MCF 10A (cell line): ENCODE measurements at regions of chr7 and their contacts with region 1.

Region 1: DNA sequence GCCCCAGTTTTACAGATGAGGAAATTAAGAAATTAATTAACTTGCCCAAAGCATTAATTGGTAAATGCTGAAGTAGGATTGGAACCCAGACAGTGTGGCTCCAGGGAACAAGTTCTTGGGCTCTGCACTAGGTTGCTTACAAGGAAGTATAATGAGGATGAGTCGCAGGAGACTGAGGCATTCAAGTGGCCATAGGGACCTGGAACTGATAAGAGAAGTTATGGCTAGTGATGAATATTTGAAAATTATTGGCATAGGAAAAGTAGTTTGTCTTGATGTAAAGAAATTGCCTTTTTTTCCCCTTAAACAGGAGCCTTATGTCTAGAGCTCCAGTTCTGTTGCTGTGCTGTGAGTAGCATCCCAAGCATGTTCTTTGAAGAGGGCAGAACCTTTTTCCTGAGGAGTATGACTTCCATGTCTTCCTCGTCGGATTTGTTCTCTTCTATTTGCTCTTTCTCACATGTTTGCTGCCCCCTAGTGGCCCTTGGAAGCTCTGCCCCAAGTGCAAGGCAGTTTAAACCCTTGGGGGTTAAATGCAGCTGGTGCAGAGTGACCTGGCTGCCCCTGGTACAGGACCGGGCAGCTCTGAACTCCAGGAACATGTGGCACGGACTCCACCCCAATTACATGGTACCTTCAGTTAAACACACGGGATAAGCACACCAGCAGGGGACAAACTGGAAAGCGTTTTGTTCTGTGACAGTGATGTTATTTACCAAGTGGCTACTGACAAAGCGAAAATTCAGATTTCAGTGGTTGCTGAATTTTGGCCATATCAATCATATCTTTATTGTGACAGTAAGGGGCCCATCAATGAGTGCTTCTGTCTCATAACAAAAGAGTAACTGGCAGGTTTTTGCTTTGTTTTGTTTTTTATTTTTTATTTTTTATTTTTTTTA is 148.8 kb downstream of the HECW1 start:
- DNase-seq: peak; percentile 86
- H3K4me3 Mint-ChIP-seq: no peak overlapping the region
- H3K27ac Mint-ChIP-seq: no peak overlapping the region
- H3K4me1 Mint-ChIP-seq: no peaks in the 10 kb centered on the region
- H3K27me3 Mint-ChIP-seq: no peaks in the 10 kb centered on the region
- CTCF ChIP-seq: peak; percentile 90

Region 2: DNA sequence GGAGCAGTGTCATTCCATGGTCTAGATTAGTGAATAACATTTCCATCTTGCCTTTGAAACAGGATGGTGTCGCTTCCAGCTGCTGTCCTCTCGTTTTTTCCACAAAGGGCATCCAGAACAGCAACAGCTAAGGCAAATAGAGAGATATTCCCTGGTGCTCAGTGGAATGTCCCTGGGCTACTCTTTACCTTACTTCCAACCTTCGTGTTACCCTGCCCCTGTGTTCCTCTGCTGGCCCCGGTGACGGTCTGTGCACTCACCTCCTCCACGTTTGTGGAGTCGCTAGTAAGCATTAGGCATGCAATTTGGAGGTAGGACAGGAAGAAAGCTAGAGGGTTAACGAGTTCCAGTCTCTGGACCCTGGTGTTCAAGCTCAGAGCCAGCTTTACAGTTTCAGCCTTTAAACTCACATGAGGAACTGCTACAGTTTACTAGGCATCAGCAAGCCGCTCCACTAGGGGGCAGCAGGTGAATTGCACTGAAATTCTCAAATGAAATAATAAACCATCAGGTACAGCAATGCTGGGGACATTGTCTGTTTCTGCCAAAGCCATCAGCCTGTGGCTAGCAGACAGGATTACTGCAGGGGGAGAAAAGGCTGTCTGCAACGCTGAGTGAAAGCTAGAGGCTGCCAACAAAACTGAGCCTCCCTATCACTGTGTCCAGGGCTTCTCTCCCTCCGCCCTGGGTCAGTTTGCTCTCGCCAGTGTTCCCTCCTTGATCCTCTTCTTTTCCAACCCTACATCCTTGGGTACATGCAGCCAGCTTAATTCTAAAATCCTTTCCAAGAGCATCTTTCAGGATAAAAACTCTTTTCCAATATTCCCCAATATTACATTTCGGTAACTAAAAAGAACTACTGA is 320.0 kb before region 1 on chr7:
- CTCF ChIA-PET with region 1: interaction called, 145 read pairs
- POLR2A ChIA-PET with region 1: interaction called, 3 read pairs
- intact Hi-C with region 1: loop called (anchors 1 kb)
- DNase-seq: peak; percentile 76
- H3K4me3 Mint-ChIP-seq: no peak overlapping the region
- H3K27ac Mint-ChIP-seq: no peak overlapping the region
- H3K4me1 Mint-ChIP-seq: no peaks in the 10 kb centered on the region
- H3K27me3 Mint-ChIP-seq: no peaks in the 10 kb centered on the region
- CTCF ChIP-seq: peak; percentile 89

Region 3: GRCh38 chr7:43119371-43120075 is 141.7 kb before region 1 on chr7:
- CTCF ChIA-PET with region 1: no interaction called
- POLR2A ChIA-PET with region 1: no interaction called
- intact Hi-C with region 1: loop called (anchors 5 kb)
- DNase-seq: peak; percentile 51
- H3K4me3 Mint-ChIP-seq: no peak overlapping the region
- H3K27ac Mint-ChIP-seq: no peak overlapping the region
- H3K4me1 Mint-ChIP-seq: no peaks in the 10 kb centered on the region
- H3K27me3 Mint-ChIP-seq: peaks cover 42% of the 10 kb centered on the region
- CTCF ChIP-seq: no peak

Region 4: DNA sequence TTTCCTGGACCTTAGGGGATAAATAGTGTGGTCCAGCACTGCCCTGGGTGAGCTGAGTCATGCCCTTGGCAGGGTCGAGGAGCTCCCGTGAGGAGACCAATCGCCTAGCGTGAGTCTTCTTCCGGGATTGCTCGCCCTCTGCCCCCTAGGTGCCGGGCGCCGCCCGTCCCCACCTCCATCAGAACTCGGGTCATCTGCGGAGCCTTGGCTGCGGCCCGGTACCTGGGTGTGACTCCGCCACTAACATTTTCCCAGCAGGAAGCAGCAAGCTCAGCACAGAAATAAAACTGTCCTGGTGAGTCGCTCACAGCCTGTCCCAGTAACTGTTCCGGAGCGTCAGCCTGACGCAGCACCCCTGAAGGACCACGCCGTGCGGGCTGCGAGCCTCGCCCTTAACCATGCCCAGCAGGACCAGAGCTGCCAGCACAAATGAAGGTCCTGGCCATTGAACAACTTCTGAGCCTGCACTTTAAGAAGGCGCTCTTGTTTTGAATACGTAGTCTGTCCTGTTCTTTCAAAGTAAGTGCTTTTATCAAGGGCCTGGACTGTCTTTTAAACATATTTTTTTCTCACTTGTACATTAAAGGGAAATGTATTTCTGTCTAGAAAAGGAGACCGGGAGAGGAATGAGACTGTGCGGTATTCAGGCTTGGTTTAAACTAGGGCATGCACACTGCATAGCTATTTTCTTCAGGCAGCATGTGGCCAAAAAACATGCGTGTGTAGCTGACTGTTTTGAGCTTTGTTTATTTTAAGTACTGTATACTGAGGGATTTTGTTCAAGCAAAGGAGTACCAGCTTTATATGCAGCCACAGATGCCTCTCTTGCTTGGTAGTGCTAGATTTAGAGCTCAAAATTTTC is 12.0 kb before region 1 on chr7:
- CTCF ChIA-PET with region 1: interaction called, 22 read pairs
- POLR2A ChIA-PET with region 1: interaction called, 3 read pairs
- intact Hi-C with region 1: no loop called
- DNase-seq: peak; percentile 74
- H3K4me3 Mint-ChIP-seq: no peak overlapping the region
- H3K27ac Mint-ChIP-seq: no peak overlapping the region
- H3K4me1 Mint-ChIP-seq: no peaks in the 10 kb centered on the region
- H3K27me3 Mint-ChIP-seq: peaks cover 20% of the 10 kb centered on the region
- CTCF ChIP-seq: no peak

Region 5: GRCh38 chr7:43454936-43455518 is 193.8 kb after region 1 on chr7:
- CTCF ChIA-PET with region 1: interaction called, 14 read pairs
- POLR2A ChIA-PET with region 1: no interaction called
- intact Hi-C with region 1: no loop called
- DNase-seq: peak; percentile 71
- H3K4me3 Mint-ChIP-seq: no peak overlapping the region
- H3K27ac Mint-ChIP-seq: no peak overlapping the region
- H3K4me1 Mint-ChIP-seq: peaks cover 6% of the 10 kb centered on the region
- H3K27me3 Mint-ChIP-seq: no peaks in the 10 kb centered on the region
- CTCF ChIP-seq: peak; percentile 48

Region 6: DNA sequence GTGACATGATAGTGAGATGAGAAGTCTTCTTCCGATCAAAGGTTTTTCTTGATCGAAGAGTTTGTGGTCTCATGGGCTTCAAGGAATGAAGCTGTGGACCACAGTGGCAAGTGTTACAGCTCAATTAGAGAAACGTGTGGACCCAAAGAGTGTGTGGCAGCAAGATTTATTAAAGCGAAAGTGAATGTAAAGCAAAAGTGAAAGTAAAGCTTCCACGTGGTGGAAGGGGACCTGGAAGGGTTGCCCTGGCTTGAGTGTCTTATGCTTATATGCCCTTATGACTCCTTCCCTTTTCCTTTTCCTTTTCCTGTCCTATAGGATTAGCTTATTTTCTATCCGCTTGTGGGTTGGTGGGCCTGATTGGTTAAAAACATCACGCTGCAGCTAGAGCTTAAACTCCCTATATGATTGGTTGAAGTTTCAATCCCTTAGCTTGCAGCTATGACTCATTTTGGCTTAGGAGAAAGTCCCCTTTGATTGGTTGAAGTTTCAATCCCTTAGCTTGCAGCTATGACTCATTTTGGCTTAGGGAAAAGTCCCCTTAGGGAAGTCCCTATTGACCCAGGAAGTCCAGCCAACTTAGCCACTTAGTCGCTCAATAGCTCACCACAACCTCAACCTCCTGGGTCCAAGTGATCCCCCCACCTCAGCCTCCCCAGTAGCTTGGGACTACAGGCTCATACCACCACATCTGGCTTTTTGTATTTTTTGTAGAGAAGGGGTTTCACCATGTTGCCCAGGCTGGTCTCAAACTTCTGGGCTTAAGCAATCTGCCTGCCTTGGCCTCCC is 573.4 kb after region 1 on chr7:
- CTCF ChIA-PET with region 1: no interaction called
- POLR2A ChIA-PET with region 1: no interaction called
- intact Hi-C with region 1: loop called (anchors 5 kb)
- DNase-seq: peak; percentile 18
- H3K4me3 Mint-ChIP-seq: no peak overlapping the region
- H3K27ac Mint-ChIP-seq: no peak overlapping the region
- H3K4me1 Mint-ChIP-seq: no peaks in the 10 kb centered on the region
- H3K27me3 Mint-ChIP-seq: peaks cover under 1% of the 10 kb centered on the region
- CTCF ChIP-seq: no peak